ENCODE measurements at regions of chr1 and their contacts with region 1.

Region 1: GRCh38 chr1:63557365-63557987 is 34.2 kb downstream of the EFCAB7 start:
- DNase-seq: no peak
- ATAC-seq: peak; percentile 88
- H3K4me3 ChIP-seq: no peak overlapping the region
- H3K27ac ChIP-seq: no peak overlapping the region
- H3K4me1 ChIP-seq: no peaks in the 10 kb centered on the region
- H3K27me3 ChIP-seq: no peaks in the 10 kb centered on the region
- CTCF ChIP-seq: peak; percentile 45 to 64 (median 55)
- EP300 ChIP-seq: no peak
- POLR2A ChIP-seq: no peak
- RAD21 ChIP-seq: peak; percentile 63

Region 2: GRCh38 chr1:63442141-63442475 is 115.4 kb before region 1 on chr1:
- CTCF ChIA-PET with region 1: no interaction called
- POLR2A ChIA-PET with region 1: no interaction called
- RAD21 ChIA-PET with region 1: no interaction called
- SMC1A ChIA-PET with region 1: no interaction called
- in situ Hi-C with region 1: no loop called
- intact Hi-C with region 1: no loop called
- DNase-seq: no peak
- ATAC-seq: no peak; the same call in 2 of the 3 replicates
- H3K4me3 ChIP-seq: no peak overlapping the region
- H3K27ac ChIP-seq: no peak overlapping the region
- H3K4me1 ChIP-seq: no peaks in the 10 kb centered on the region
- H3K27me3 ChIP-seq: no peaks in the 10 kb centered on the region
- CTCF ChIP-seq: no peak
- EP300 ChIP-seq: no peak
- POLR2A ChIP-seq: no peak
- RAD21 ChIP-seq: no peak

Region 3: GRCh38 chr1:63569640-63570316 is 12.3 kb after region 1 on chr1:
- CTCF ChIA-PET with region 1: interaction called, 48 read pairs
- POLR2A ChIA-PET with region 1: interaction called, 3 read pairs
- RAD21 ChIA-PET with region 1: interaction called, 5 read pairs
- SMC1A ChIA-PET with region 1: interaction called, 22 read pairs
- in situ Hi-C with region 1: no loop called
- intact Hi-C with region 1: no loop called
- DNase-seq: no peak
- ATAC-seq: peak; percentile 89
- H3K4me3 ChIP-seq: no peak overlapping the region
- H3K27ac ChIP-seq: no peak overlapping the region
- H3K4me1 ChIP-seq: no peaks in the 10 kb centered on the region
- H3K27me3 ChIP-seq: no peaks in the 10 kb centered on the region
- CTCF ChIP-seq: no peak
- EP300 ChIP-seq: no peak
- POLR2A ChIP-seq: no peak
- RAD21 ChIP-seq: no peak

Region 4: GRCh38 chr1:63575340-63575826 is 17.9 kb after region 1 on chr1:
- CTCF ChIA-PET with region 1: interaction called, 48 read pairs
- POLR2A ChIA-PET with region 1: interaction called, 3 read pairs
- RAD21 ChIA-PET with region 1: interaction called, 5 read pairs
- SMC1A ChIA-PET with region 1: interaction called, 22 read pairs
- in situ Hi-C with region 1: no loop called
- intact Hi-C with region 1: no loop called
- DNase-seq: no peak
- ATAC-seq: peak; percentile 51
- H3K4me3 ChIP-seq: no peak overlapping the region
- H3K27ac ChIP-seq: no peak overlapping the region
- H3K4me1 ChIP-seq: no peaks in the 10 kb centered on the region
- H3K27me3 ChIP-seq: no peaks in the 10 kb centered on the region
- CTCF ChIP-seq: peak; percentile 43 to 59 (median 50); a peak in 4 of 6 replicates
- EP300 ChIP-seq: no peak
- POLR2A ChIP-seq: no peak
- RAD21 ChIP-seq: peak; percentile 9; the same call in 1 of the 2 replicates

Region 5: DNA sequence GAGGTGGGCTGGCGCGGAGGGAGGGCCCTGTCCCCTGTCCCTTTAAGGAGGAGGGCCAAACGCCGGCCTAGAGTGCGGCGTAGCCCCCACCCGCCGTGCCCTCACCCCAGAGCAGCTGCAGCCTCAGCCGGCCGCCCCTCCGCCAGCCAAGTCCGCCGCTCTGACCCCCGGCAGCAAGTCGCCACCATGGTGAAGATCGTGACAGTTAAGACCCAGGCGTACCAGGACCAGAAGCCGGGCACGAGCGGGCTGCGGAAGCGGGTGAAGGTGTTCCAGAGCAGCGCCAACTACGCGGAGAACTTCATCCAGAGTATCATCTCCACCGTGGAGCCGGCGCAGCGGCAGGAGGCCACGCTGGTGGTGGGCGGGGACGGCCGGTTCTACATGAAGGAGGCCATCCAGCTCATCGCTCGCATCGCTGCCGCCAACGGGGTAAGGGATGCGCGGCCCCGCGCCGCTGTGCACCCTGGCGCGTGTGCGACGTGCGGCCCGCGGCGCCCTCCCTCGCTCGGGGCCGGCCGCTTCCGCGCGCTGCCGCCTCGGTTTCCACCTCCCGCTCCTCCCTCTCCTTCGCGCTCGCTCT is 35.9 kb after region 1 on chr1 and contains the start of gene PGM1:
- CTCF ChIA-PET with region 1: interaction called, 4 read pairs
- POLR2A ChIA-PET with region 1: no interaction called
- RAD21 ChIA-PET with region 1: interaction called, 5 read pairs
- SMC1A ChIA-PET with region 1: interaction called, 10 read pairs
- in situ Hi-C with region 1: no loop called
- intact Hi-C with region 1: no loop called
- DNase-seq: peak; percentile 27
- ATAC-seq: peak; percentile 88
- H3K4me3 ChIP-seq: peak within 1 kb of the TSS; percentile 86
- H3K27ac ChIP-seq: peak within 1 kb of the TSS; percentile 78
- H3K4me1 ChIP-seq: no peaks in the 10 kb centered on the region
- H3K27me3 ChIP-seq: no peaks in the 10 kb centered on the region
- CTCF ChIP-seq: 0 out of 6 replicates have a peak, but pooled peaks of 1 of the 3 experiments have one; percentile 5
- EP300 ChIP-seq: no peak
- POLR2A ChIP-seq: peak; percentile 88
- RAD21 ChIP-seq: no peak
- polyA plus RNA-seq, gene PGM1: 22.5 to 29.6 TPM

Region 6: GRCh38 chr1:63622849-63623566 is 65.5 kb after region 1 on chr1:
- CTCF ChIA-PET with region 1: interaction called, 12 read pairs
- POLR2A ChIA-PET with region 1: no interaction called
- RAD21 ChIA-PET with region 1: interaction called, 8 read pairs
- SMC1A ChIA-PET with region 1: interaction called, 7 read pairs
- in situ Hi-C with region 1: no loop called
- intact Hi-C with region 1: no loop called
- DNase-seq: peak; percentile 3
- ATAC-seq: peak; percentile 69
- H3K4me3 ChIP-seq: no peak overlapping the region
- H3K27ac ChIP-seq: no peak overlapping the region
- H3K4me1 ChIP-seq: peaks cover 6% of the 10 kb centered on the region; the same call in 1 of the 2 replicates
- H3K27me3 ChIP-seq: no peaks in the 10 kb centered on the region
- CTCF ChIP-seq: no peak; a peak in 1 of 6 replicates
- EP300 ChIP-seq: no peak
- POLR2A ChIP-seq: no peak
- RAD21 ChIP-seq: peak; percentile 37